ENCODE measurements at regions of chr16 and their contacts with region 1.

Region 1: GRCh38 chr16:57648590-57649442 is 19.3 kb upstream of the ADGRG3 start:
- DNase-seq: peak; percentile 85 to 93
- ATAC-seq: peak; percentile 56 to 78
- H3K4me3 ChIP-seq: no peak overlapping the region
- H3K27ac ChIP-seq: peak overlapping the region in 1 of 2 experiments; percentile 89; a peak in 3 of 6 replicates
- H3K4me1 ChIP-seq: peaks cover 41% of the 10 kb centered on the region
- CTCF ChIP-seq: peak; percentile 100
- EP300 ChIP-seq: no peak
- POLR2A ChIP-seq: no peak
- RAD21 ChIP-seq: peak; percentile 100

Region 2: GRCh38 chr16:57530104-57530521 is 118.7 kb before region 1 on chr16:
- CTCF ChIA-PET with region 1: no interaction called
- POLR2A ChIA-PET with region 1: no interaction called
- DNase-seq: no peak
- ATAC-seq: peak; percentile 39 to 71; a peak in 4 of 6 replicates
- H3K4me3 ChIP-seq: no peak overlapping the region
- H3K27ac ChIP-seq: peak overlapping the region; percentile 65 to 79
- H3K4me1 ChIP-seq: peaks cover 55% of the 10 kb centered on the region
- CTCF ChIP-seq: no peak
- EP300 ChIP-seq: no peak
- POLR2A ChIP-seq: no peak
- RAD21 ChIP-seq: no peak

Region 3: DNA sequence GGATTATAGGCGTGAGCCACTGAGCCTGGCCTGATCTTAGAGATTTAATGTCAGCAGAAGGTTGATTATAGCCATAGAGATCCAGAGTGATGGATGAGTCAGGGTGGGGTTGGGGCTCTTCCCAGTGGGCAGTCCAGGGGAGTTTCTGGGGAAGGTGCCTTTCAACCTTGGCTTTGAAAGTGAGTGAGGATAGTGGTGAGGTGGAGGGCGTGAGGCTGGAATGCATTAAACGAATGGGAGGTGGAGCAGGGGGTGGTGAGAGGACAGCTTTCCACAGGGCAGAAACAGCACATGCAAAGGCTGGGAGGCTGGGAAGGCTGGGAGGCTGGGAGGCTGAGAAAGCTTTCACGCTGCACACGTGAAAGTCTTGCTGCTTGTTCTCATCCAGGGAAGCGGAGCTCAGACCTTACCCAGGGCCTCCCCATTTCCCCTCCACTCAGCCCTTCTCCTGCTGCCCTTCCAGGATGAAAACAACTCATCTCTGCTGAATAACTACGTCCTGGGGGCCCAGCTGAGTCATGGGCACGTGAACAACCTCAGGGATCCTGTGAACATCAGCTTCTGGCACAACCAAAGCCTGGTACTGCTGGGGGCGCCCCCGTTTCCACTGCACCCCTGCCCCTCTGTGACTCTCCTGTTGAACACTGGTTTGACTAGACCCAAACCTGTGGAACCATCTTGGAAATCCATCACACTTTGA is 84.1 kb before region 1 on chr16:
- CTCF ChIA-PET with region 1: interaction called, 18 read pairs
- POLR2A ChIA-PET with region 1: no interaction called
- DNase-seq: no peak
- ATAC-seq: peak; percentile 3 to 28; a peak in 2 of 6 replicates
- H3K4me3 ChIP-seq: no peak overlapping the region
- H3K27ac ChIP-seq: peak overlapping the region in 1 of 2 experiments; percentile 48; a peak in 2 of 6 replicates
- H3K4me1 ChIP-seq: 0 out of 3 replicates have a peak, but pooled peaks cover 5% of the 10 kb centered on the region
- CTCF ChIP-seq: no peak
- EP300 ChIP-seq: no peak
- POLR2A ChIP-seq: no peak
- RAD21 ChIP-seq: no peak

Region 4: DNA sequence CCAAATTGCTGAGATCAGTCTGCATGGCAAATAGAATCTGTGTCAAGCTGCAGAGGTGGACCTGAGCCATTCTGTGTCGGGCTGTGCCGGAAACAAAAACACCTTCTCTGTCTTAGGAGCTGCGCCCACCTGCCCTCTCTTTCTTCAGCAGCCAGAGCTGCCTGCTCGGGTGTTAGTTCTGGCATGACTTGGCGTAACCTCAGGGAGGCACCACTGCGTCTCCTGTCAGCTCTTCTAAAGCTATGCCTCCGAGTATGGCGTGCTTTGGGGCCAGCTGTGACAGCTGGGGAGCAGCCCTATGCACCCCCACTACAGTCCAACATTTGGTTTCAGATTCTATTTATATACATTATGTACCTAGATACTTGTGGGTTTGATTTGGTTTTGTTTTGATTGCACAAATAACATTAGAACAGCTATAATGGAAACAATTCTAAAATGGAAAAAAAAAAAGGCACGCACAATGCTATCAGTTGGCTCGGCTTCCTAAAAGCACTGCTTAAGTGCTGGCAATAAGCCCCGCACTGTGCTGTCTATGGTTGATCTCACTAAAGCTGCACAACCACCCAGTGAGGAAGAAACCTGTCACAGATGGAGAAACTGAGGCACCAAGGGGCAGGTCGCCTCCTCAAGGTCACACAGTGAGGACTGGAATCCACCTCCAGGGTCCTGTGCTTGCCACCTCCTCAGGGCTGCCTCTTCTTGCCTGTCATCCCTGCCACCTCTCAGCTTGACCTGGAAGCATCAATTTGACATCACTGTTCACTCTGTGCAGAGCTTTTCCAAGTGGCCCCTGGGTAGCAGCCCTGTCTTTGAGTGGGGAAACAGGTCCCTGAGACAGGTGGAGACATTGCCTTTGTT is 39.0 kb before region 1 on chr16:
- CTCF ChIA-PET with region 1: interaction called, 785 read pairs
- POLR2A ChIA-PET with region 1: no interaction called
- DNase-seq: no peak
- ATAC-seq: peak in 1 of 2 experiments; percentile 21; a peak in 3 of 6 replicates
- H3K4me3 ChIP-seq: no peak overlapping the region
- H3K27ac ChIP-seq: peak overlapping the region; percentile 69 to 74
- H3K4me1 ChIP-seq: peaks cover 71% of the 10 kb centered on the region
- CTCF ChIP-seq: no peak
- EP300 ChIP-seq: no peak
- POLR2A ChIP-seq: no peak
- RAD21 ChIP-seq: peak in 1 of 2 experiments; percentile 10; a peak in 1 of 5 replicates

Region 5: GRCh38 chr16:57658878-57659674 is 10.3 kb after region 1 on chr16:
- CTCF ChIA-PET with region 1: interaction called, 42 read pairs
- POLR2A ChIA-PET with region 1: no interaction called
- DNase-seq: no peak
- ATAC-seq: no peak; a peak in 1 of 6 replicates
- H3K4me3 ChIP-seq: no peak overlapping the region
- H3K27ac ChIP-seq: no peak overlapping the region
- H3K4me1 ChIP-seq: no peaks in the 10 kb centered on the region
- CTCF ChIP-seq: no peak
- EP300 ChIP-seq: no peak
- POLR2A ChIP-seq: no peak
- RAD21 ChIP-seq: no peak

Region 6: DNA sequence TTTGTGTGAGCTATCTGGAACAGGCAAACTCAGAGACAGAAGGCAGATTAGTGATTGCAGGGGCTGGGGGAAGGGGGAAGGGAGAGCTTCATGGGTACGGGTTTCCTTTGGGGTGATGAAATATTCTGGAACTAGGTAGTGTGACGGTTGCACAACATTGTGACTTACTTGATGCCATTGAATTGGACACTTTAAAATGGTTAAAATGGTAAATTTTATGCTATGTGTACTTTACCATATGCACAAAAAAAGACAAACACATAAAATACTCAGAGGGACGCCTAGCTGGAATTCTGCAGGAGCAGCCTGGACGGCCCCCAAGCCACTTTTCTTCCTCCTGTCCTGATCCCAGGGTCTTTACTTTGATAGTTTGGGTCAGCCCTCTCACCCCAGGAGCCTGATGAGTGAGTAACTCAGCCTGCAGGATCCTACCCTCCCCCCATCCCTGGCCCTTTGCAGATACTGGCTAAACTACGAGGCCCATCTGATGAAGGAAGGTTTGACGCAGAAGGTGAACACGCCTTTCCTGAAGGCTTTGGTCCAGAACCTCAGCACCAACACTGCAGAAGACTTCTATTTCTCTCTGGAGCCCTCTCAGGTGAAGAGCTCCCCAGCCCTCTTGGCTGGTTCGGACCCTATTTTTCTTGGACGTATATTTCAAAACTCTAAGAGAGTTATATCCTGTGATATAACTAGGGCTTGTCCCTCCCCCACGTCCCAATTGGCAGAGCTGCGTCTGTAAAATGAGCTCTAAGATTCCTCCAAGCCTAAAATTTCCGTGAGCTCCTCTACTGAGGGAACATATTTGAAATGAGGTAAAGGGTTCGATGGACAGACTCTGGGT is 27.1 kb after region 1 on chr16:
- CTCF ChIA-PET with region 1: interaction called, 34 read pairs
- POLR2A ChIA-PET with region 1: no interaction called
- DNase-seq: peak in 1 of 2 experiments; percentile 66
- ATAC-seq: peak; percentile 51 to 66; a peak in 5 of 6 replicates
- H3K4me3 ChIP-seq: no peak overlapping the region
- H3K27ac ChIP-seq: peak overlapping the region; percentile 55 to 76
- H3K4me1 ChIP-seq: peaks cover 35% of the 10 kb centered on the region
- CTCF ChIP-seq: no peak
- EP300 ChIP-seq: no peak; a peak in 1 of 5 replicates
- POLR2A ChIP-seq: no peak
- RAD21 ChIP-seq: no peak

Region 7: DNA sequence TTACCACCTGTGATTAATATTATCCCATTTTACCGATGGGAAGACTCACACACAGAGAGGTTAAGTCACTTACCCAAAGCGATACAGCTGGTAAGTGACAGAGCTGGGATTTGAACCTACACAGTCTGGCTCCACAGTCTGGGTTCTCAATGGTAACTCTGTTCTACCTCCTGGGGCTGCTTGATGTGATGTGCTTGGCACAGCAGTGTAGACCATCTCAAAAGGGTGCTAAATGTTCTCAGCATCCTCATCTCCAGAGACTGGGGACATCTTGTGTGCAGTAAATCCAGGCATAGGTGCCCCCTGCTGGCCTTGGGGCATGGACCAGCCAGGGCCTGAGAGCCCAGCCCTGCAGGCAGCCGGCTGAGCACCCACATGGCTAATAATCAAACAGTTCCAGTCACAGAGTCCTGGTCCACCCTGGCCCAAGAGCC is 71.3 kb after region 1 on chr16:
- CTCF ChIA-PET with region 1: interaction called, 13 read pairs
- POLR2A ChIA-PET with region 1: no interaction called
- DNase-seq: peak; percentile 72 to 75
- ATAC-seq: peak; percentile 96 to 97
- H3K4me3 ChIP-seq: no peak overlapping the region
- H3K27ac ChIP-seq: peak overlapping the region; percentile 25 to 32; a peak in 4 of 6 replicates
- H3K4me1 ChIP-seq: peaks cover 9% of the 10 kb centered on the region; the same call in 2 of the 3 replicates
- CTCF ChIP-seq: peak; percentile 82
- EP300 ChIP-seq: no peak
- POLR2A ChIP-seq: no peak
- RAD21 ChIP-seq: peak; percentile 82 to 83

Region 8: GRCh38 chr16:57748596-57748995 is 99.8 kb after region 1 on chr16:
- CTCF ChIA-PET with region 1: interaction called, 10 read pairs
- POLR2A ChIA-PET with region 1: no interaction called
- DNase-seq: no peak
- ATAC-seq: no peak
- H3K4me3 ChIP-seq: no peak overlapping the region
- H3K27ac ChIP-seq: no peak overlapping the region
- H3K4me1 ChIP-seq: no peaks in the 10 kb centered on the region
- CTCF ChIP-seq: no peak
- EP300 ChIP-seq: no peak
- POLR2A ChIP-seq: no peak
- RAD21 ChIP-seq: no peak

Region 9: DNA sequence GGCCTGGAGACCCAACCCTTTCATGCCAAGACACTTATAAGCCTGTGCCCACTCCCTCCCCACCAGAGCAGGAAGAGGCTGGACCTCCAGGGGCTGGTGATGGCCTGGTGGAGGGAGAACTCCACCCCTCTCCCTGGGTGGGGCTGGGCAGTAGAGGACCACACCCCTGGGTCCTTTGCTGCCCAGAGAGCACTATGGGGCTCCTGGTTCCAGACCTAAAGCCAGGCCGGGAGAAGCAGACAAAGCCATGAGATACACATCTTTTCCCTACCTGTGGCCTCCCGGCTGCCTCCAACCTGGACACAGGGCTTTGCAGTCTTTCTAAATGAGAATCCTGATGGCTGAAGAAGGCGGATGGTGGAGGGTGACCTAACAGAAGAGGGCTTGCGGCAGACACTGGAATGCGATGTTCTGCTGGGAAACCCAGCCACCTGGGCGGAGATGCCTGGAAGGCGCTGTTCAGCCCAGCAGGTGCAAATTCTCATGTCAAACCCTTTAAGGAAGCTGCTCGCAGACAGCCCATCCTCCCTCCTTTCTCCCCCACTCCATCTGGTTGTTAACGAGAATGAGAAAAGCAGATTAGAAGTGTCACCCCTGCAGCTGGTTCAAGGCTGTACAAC is 197.4 kb after region 1 on chr16:
- CTCF ChIA-PET with region 1: no interaction called
- POLR2A ChIA-PET with region 1: no interaction called
- DNase-seq: no peak
- ATAC-seq: peak in 1 of 2 experiments; percentile 64; a peak in 3 of 6 replicates
- H3K4me3 ChIP-seq: no peak overlapping the region
- H3K27ac ChIP-seq: peak overlapping the region in 1 of 2 experiments; percentile 47; a peak in 3 of 6 replicates
- H3K4me1 ChIP-seq: peaks cover 22% of the 10 kb centered on the region; the same call in 2 of the 3 replicates
- CTCF ChIP-seq: no peak
- EP300 ChIP-seq: no peak
- POLR2A ChIP-seq: no peak
- RAD21 ChIP-seq: no peak

Region 10: GRCh38 chr16:59478838-59479237 is 1830.0 kb after region 1 on chr16:
- CTCF ChIA-PET with region 1: no interaction called
- POLR2A ChIA-PET with region 1: no interaction called
- DNase-seq: no peak
- ATAC-seq: no peak
- H3K4me3 ChIP-seq: no peak overlapping the region
- H3K27ac ChIP-seq: no peak overlapping the region
- H3K4me1 ChIP-seq: no peaks in the 10 kb centered on the region
- CTCF ChIP-seq: no peak
- EP300 ChIP-seq: no peak
- POLR2A ChIP-seq: no peak
- RAD21 ChIP-seq: no peak